MCF 10A (cell line): ENCODE measurements at regions of chr13 and their contacts with region 1.

Region 1: GRCh38 chr13:25901460-25902376 is 150.1 kb downstream of the SHISA2 start:
- DNase-seq: peak; percentile 91
- H3K4me3 Mint-ChIP-seq: no peak overlapping the region
- H3K27ac Mint-ChIP-seq: peak overlapping the region; percentile 80
- H3K4me1 Mint-ChIP-seq: peaks cover 19% of the 10 kb centered on the region
- H3K27me3 Mint-ChIP-seq: no peaks in the 10 kb centered on the region
- CTCF ChIP-seq: no peak

Region 2: DNA sequence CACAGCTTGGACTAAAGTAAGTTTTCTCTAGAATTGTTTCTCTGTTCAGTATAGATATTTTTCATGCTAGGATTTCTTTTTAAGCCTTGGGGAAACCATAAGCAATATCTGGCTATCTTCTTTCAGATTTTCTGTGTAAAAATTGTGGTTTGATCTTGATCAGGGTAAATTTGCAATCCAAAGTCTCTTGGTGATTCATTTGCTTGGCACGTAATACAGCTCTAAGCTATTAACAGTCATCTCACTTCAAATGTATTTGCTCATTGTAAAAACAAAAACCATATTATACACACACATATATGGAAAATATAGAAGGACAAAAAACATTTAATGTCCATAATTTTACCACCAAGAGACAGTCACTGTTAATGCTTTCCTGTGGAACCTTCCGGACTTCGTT is 40.9 kb before region 1 on chr13:
- CTCF ChIA-PET with region 1: no interaction called
- POLR2A ChIA-PET with region 1: interaction called, 10 read pairs
- intact Hi-C with region 1: no loop called
- DNase-seq: peak; percentile 73
- H3K4me3 Mint-ChIP-seq: peak overlapping the region; percentile 6
- H3K27ac Mint-ChIP-seq: peak overlapping the region; percentile 5
- H3K4me1 Mint-ChIP-seq: peaks cover 27% of the 10 kb centered on the region
- H3K27me3 Mint-ChIP-seq: no peaks in the 10 kb centered on the region
- CTCF ChIP-seq: no peak

Region 3: GRCh38 chr13:26037301-26037700 is 135.6 kb after region 1 on chr13:
- CTCF ChIA-PET with region 1: no interaction called
- POLR2A ChIA-PET with region 1: no interaction called
- intact Hi-C with region 1: no loop called
- DNase-seq: peak; percentile 49
- H3K4me3 Mint-ChIP-seq: no peak overlapping the region
- H3K27ac Mint-ChIP-seq: no peak overlapping the region
- H3K4me1 Mint-ChIP-seq: no peaks in the 10 kb centered on the region
- H3K27me3 Mint-ChIP-seq: no peaks in the 10 kb centered on the region
- CTCF ChIP-seq: peak; percentile 33

Region 4: GRCh38 chr13:26561651-26562511 is 660.2 kb after region 1 on chr13:
- CTCF ChIA-PET with region 1: no interaction called
- POLR2A ChIA-PET with region 1: no interaction called
- intact Hi-C with region 1: no loop called
- DNase-seq: no peak
- H3K4me3 Mint-ChIP-seq: no peak overlapping the region
- H3K27ac Mint-ChIP-seq: no peak overlapping the region
- H3K4me1 Mint-ChIP-seq: peaks cover 12% of the 10 kb centered on the region
- H3K27me3 Mint-ChIP-seq: no peaks in the 10 kb centered on the region
- CTCF ChIP-seq: no peak

Region 5: GRCh38 chr13:26847281-26847680 is 945.6 kb after region 1 on chr13:
- CTCF ChIA-PET with region 1: no interaction called
- POLR2A ChIA-PET with region 1: no interaction called
- intact Hi-C with region 1: no loop called
- DNase-seq: no peak
- H3K4me3 Mint-ChIP-seq: no peak overlapping the region
- H3K27ac Mint-ChIP-seq: no peak overlapping the region
- H3K4me1 Mint-ChIP-seq: no peaks in the 10 kb centered on the region
- H3K27me3 Mint-ChIP-seq: peaks cover 54% of the 10 kb centered on the region
- CTCF ChIP-seq: no peak